ENCODE measurements at regions of chr11 and their contacts with region 1.

Region 1: DNA sequence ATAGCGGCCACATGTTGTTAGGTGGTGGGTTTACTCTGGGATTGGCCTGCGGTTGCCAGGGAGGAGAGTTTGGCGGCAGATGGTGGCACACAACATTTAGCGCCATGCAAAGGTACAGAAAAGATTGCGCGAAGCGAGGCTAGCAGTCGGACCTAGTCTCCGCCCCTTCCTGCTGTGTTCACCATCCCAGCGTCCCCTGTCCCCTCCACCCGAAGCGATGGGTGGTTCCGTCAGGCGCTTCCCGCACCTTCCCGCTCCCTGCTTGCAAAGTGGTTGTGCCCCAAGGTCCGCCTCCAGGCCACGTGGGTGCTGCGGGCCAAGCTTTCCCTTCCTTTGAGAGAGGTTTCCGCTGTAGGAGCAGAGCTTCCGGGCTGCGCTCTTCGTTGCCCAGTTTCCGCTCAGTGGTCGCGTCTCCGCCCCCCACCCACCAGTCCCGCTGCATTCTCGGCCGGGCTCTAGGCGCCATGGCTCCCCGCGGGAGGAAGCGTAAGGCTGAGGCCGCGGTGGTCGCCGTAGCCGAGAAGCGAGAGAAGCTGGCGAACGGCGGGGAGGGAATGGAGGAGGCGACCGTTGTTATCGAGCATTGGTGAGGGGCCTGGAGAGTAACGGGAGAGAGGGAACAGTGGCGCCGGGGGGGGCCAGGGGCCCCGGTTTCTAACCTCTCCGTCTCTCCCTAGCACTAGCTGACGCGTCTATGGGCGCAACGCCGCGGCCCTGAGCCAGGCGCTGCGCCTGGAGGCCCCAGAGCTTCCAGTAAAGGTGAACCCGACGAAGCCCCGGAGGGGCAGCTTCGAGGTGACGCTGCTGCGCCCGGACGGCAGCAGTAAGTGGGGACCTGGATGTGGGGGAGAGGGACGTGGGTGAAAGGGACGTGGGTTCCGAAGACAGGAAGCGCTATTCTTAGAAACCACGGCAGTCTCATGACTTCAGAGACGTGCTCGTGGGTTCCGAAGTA is at the start of gene SELENOH:
- DNase-seq: peak; percentile 84
- ATAC-seq: peak; percentile 90
- H3K4me3 Mint-ChIP-seq: peak within 1 kb of the TSS; percentile 96
- H3K27ac Mint-ChIP-seq: peak within 1 kb of the TSS; percentile 98
- H3K4me1 Mint-ChIP-seq: peaks cover 30% of the 10 kb centered on the region
- H3K27me3 Mint-ChIP-seq: no peaks in the 10 kb centered on the region
- CTCF ChIP-seq: no peak
- total RNA-seq, gene SELENOH: 210 and 224 TPM in 2 replicates

Region 2: GRCh38 chr11:57335343-57336110 is 405.9 kb before region 1 on chr11 and contains the start of gene SSRP1:
- CTCF ChIA-PET with region 1: no interaction called
- POLR2A ChIA-PET with region 1: interaction called, 5 read pairs
- intact Hi-C with region 1: loop called (anchors 5 kb)
- DNase-seq: peak; percentile 77
- ATAC-seq: peak; percentile 97
- H3K4me3 Mint-ChIP-seq: peak within 1 kb of the TSS; percentile 94
- H3K27ac Mint-ChIP-seq: peak within 1 kb of the TSS; percentile 98
- H3K4me1 Mint-ChIP-seq: peaks cover 27% of the 10 kb centered on the region
- H3K27me3 Mint-ChIP-seq: peaks cover 2% of the 10 kb centered on the region
- CTCF ChIP-seq: no peak
- total RNA-seq, gene SSRP1: 120 and 127 TPM in 2 replicates

Region 3: GRCh38 chr11:57751676-57752253 is 10.4 kb after region 1 on chr11 and contains the start of gene BTBD18:
- CTCF ChIA-PET with region 1: interaction called, 10 read pairs
- POLR2A ChIA-PET with region 1: interaction called, 8 read pairs
- intact Hi-C with region 1: loop called (anchors 1 kb)
- DNase-seq: no peak
- ATAC-seq: peak; percentile 66
- H3K4me3 Mint-ChIP-seq: no peak within 1 kb of the TSS
- H3K27ac Mint-ChIP-seq: peak within 1 kb of the TSS; percentile 66
- H3K4me1 Mint-ChIP-seq: peaks cover 9% of the 10 kb centered on the region
- H3K27me3 Mint-ChIP-seq: no peaks in the 10 kb centered on the region
- CTCF ChIP-seq: no peak
- total RNA-seq, gene BTBD18: not detected in 2 replicates

Region 4: DNA sequence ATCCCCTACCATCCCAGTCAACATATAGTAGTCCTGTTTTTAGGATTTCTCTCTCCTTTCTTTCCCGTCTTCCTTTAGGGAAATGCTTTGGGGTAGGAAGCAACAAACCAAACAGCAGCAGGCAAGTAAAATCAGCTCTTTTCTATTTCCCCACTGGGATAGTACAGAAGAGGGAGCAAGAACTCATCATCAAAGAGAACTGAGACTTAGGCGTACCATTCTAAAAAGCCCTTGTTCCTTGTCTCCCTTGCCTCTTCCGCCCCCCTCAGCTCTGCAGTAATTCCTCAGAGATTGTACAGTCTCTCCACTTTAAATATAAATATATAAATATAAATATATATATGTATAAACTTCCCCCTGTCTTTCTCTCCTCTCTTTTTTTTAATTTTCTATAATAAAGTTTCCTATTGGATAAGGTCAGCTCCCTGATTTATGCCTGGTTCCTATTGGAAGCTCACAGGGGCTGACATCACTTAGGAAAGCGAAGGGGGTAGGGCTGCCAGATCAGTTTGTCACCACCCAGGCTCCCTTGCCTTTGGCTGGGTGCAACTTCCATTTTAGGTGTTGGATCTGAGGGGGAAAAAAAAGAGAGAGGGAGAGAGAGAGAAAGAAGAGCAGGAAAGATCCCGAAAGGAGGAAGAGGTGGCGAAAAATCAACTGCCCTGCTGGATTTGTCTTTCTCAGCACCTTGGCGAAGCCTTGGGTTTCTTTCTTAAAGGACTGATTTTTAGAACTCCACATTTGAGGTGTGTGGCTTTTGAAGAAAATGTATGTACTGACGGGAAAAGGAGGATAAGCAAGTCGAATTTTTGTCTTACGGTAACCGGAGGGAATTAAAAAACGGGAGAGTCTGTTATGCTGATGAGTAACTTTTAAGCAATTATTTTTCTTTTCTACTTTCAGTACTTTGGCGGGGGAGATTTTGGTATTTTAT is 20.2 kb after region 1 on chr11 and contains the start of gene CTNND1:
- CTCF ChIA-PET with region 1: no interaction called
- POLR2A ChIA-PET with region 1: interaction called, 14 read pairs
- intact Hi-C with region 1: loop called (anchors 2 kb)
- DNase-seq: no peak
- ATAC-seq: peak; percentile 82
- H3K4me3 Mint-ChIP-seq: peak within 1 kb of the TSS; percentile 93
- H3K27ac Mint-ChIP-seq: peak within 1 kb of the TSS; percentile 77
- H3K4me1 Mint-ChIP-seq: peaks cover 30% of the 10 kb centered on the region
- H3K27me3 Mint-ChIP-seq: no peaks in the 10 kb centered on the region
- CTCF ChIP-seq: no peak
- total RNA-seq, gene CTNND1: 34.2 and 42.3 TPM in 2 replicates

Region 5: GRCh38 chr11:57785072-57785471 is 43.7 kb after region 1 on chr11:
- CTCF ChIA-PET with region 1: no interaction called
- POLR2A ChIA-PET with region 1: interaction called, 32 read pairs
- intact Hi-C with region 1: no loop called
- DNase-seq: no peak
- ATAC-seq: peak; percentile 87
- H3K4me3 Mint-ChIP-seq: peak overlapping the region; percentile 75
- H3K27ac Mint-ChIP-seq: peak overlapping the region; percentile 92
- H3K4me1 Mint-ChIP-seq: peaks cover 67% of the 10 kb centered on the region
- H3K27me3 Mint-ChIP-seq: no peaks in the 10 kb centered on the region
- CTCF ChIP-seq: no peak

Region 6: DNA sequence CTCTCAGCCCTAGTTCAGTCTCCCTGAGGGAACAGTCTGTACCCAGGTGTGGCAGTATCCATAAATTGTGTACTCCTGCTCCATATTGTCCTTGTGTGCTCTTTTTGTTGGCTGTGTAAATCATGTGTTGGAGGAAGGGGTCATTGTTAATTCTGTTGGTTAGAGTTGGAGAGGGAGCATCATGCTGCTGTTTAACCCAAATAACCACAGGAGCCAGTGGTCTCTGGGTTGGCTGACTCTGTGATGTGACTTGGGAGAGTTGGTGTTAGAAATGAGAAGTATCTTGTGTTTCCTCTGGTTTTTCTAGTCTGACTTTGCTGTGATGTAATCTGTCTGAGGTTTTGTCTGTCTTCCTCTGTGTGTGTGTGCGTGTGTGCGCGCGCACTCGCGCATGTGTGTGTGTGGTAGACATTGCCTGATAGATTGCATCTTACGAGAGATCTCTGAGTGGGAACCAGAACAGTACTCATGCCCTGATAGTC is 50.7 kb after region 1 on chr11:
- CTCF ChIA-PET with region 1: no interaction called
- POLR2A ChIA-PET with region 1: interaction called, 39 read pairs
- intact Hi-C with region 1: loop called (anchors 1 kb)
- DNase-seq: peak; percentile 71
- ATAC-seq: peak; percentile 89
- H3K4me3 Mint-ChIP-seq: peak overlapping the region; percentile 75
- H3K27ac Mint-ChIP-seq: peak overlapping the region; percentile 90
- H3K4me1 Mint-ChIP-seq: peaks cover 73% of the 10 kb centered on the region
- H3K27me3 Mint-ChIP-seq: no peaks in the 10 kb centered on the region
- CTCF ChIP-seq: no peak